Left colon (tissue), 2 donors: ENCODE measurements at regions of chr11 and their contacts with region 1.

Region 1: GRCh38 chr11:77187776-77188632 is 60.0 kb downstream of the MYO7A start:
- DNase-seq: peak; percentile 79 to 92
- ATAC-seq: peak; percentile 70

Region 2: DNA sequence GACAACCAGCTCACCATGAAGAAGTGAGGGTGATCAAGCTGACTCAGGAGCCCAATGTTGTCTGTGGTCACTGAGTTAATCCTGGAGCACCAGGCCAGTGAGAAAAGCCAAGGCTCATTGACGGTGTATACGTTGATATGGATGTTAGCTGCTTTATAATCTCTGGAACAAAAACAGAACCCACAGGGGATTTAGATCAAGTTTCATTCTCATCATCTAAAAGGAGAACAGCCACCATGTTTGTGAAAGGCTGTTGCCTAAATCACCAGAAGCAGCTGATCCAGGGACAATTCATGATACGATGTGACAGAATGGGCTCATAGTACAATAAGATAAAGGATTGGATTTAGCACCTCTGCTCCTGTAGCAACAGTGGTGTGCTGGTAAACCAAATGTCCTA is 45.0 kb after region 1 on chr11:
- intact Hi-C with region 1: no loop called
- DNase-seq: no peak
- ATAC-seq: no peak

Region 3: GRCh38 chr11:77547863-77548551 is 360.0 kb after region 1 on chr11:
- intact Hi-C with region 1: loop called (anchors 5 to 10 kb)
- DNase-seq: peak in 1 of 2 donors; percentile 19
- ATAC-seq: peak; percentile 91